HCT116 (cell line): ENCODE measurements at regions of chr11 and their contacts with region 1.

Region 1: DNA sequence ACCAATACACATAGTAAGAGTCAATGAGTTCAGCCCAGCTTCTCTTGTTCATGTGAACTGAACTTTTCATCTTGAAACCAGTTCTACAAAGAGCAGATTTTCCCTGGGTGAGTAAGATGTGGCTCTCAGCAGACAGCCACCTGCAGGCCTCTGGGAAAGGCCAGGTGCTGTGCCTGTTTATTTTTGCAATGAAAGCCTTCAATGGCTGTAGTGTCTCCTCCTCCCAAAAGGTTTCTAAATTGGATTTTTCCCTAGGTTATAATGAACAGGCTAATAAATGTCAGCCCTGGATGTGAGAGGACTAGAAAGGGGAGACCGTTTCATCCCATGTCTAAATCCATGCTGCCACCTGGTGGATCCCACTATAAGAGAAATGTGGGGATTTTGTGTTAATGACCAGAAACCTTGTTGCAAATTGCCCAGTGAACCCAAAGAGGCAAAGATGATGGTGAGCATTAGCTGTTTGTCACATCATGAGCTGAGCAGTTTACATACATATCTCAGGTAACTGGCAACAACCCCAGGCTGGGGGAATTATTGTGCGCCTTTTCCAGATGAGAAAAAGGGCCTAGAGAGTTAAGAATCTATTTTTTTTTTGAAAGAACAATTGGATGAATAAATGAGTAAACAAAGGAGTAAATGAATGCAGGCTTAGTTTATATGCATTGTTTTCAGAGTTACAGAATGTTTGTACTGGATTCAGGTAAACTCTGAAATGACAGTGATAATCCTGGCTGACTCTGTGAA is 12.7 kb downstream of the C11orf91 start:
- DNase-seq: peak; percentile 60
- ATAC-seq: peak; percentile 43
- H3K4me3 ChIP-seq: no peak overlapping the region
- H3K27ac ChIP-seq: no peak overlapping the region
- H3K4me1 ChIP-seq: peaks cover 29 to 56% of the 10 kb centered on the region in 2 experiments
- H3K27me3 ChIP-seq: no peaks in the 10 kb centered on the region
- CTCF ChIP-seq: peak; percentile 70 to 90 (median 88); a peak in 5 of 6 replicates
- POLR2A ChIP-seq: no peak
- RAD21 ChIP-seq: peak; percentile 98

Region 2: DNA sequence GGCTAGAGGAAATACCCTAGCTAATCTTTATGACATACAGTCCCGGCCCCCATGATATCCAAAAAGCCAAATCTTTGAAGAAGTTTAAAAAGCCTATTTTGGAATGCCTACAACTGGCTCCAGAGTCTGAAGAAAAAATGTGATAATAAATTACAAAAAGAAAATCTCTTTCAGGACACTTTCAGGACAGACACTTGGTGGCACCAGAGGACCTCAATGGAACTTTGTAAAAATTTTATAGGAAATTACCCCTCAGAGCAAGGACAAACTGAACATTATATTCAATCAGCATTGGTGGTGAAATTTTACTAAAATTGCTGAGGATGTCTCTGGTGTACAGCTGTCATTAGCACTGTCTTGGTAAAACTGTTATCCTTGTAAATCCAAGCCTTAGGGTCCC is 974.4 kb before region 1 on chr11:
- CTCF ChIA-PET with region 1: no interaction called
- POLR2A ChIA-PET with region 1: no interaction called
- RAD21 ChIA-PET with region 1: no interaction called
- intact Hi-C with region 1: loop called (anchors 10 kb)
- DNase-seq: peak; percentile 8
- ATAC-seq: peak; percentile 66
- H3K4me3 ChIP-seq: no peak overlapping the region
- H3K27ac ChIP-seq: no peak overlapping the region
- H3K4me1 ChIP-seq: no peaks in the 10 kb centered on the region
- H3K27me3 ChIP-seq: no peaks in the 10 kb centered on the region
- CTCF ChIP-seq: peak; percentile 55 to 69 (median 68)
- POLR2A ChIP-seq: no peak
- RAD21 ChIP-seq: peak; percentile 81

Region 3: GRCh38 chr11:32960553-32961164 is 727.2 kb before region 1 on chr11:
- CTCF ChIA-PET with region 1: no interaction called
- POLR2A ChIA-PET with region 1: no interaction called
- RAD21 ChIA-PET with region 1: no interaction called
- intact Hi-C with region 1: loop called (anchors 5 kb)
- DNase-seq: peak; percentile 28
- ATAC-seq: no peak
- H3K4me3 ChIP-seq: no peak overlapping the region
- H3K27ac ChIP-seq: no peak overlapping the region
- H3K4me1 ChIP-seq: no peaks in the 10 kb centered on the region
- H3K27me3 ChIP-seq: no peaks in the 10 kb centered on the region
- CTCF ChIP-seq: peak; percentile 49 to 72 (median 64)
- POLR2A ChIP-seq: no peak
- RAD21 ChIP-seq: peak; percentile 82

Region 4: GRCh38 chr11:33195462-33196173 is 492.3 kb before region 1 on chr11:
- CTCF ChIA-PET with region 1: no interaction called
- POLR2A ChIA-PET with region 1: interaction called, 10 read pairs
- RAD21 ChIA-PET with region 1: no interaction called
- intact Hi-C with region 1: no loop called
- DNase-seq: no peak
- ATAC-seq: no peak
- H3K4me3 ChIP-seq: no peak overlapping the region
- H3K27ac ChIP-seq: no peak overlapping the region
- H3K4me1 ChIP-seq: no peaks in the 10 kb centered on the region
- H3K27me3 ChIP-seq: no peaks in the 10 kb centered on the region
- CTCF ChIP-seq: no peak
- POLR2A ChIP-seq: no peak
- RAD21 ChIP-seq: no peak

Region 5: DNA sequence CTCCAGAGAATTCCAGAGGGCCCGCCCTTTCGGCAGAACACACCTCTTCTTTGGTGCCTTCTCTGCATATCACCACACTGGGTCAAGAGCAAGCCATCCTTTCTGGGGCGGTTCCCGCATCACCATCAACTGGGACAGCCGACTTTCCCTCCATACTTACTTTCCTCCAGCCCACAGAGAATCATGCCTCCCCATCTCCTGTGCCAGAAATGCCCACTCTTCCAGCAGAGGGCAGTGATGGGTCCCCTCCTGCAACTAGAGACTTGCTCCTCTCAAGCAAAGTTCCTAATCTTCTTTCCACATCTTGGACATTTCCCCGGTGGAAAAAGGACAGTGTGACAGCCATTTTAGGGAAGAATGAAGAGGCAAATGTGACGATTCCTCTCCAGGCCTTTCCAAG is 145.0 kb before region 1 on chr11:
- CTCF ChIA-PET with region 1: interaction called, 6 read pairs
- POLR2A ChIA-PET with region 1: no interaction called
- RAD21 ChIA-PET with region 1: no interaction called
- intact Hi-C with region 1: loop called (anchors 1 kb)
- DNase-seq: peak; percentile 22
- ATAC-seq: peak; percentile 94
- H3K4me3 ChIP-seq: no peak overlapping the region
- H3K27ac ChIP-seq: no peak overlapping the region
- H3K4me1 ChIP-seq: peaks cover 0 to 5% of the 10 kb centered on the region in 2 experiments; a peak in 1 of 4 replicates
- H3K27me3 ChIP-seq: no peaks in the 10 kb centered on the region
- CTCF ChIP-seq: peak; percentile 67 to 87 (median 80); a peak in 5 of 6 replicates
- POLR2A ChIP-seq: no peak
- RAD21 ChIP-seq: peak; percentile 76

Region 6: GRCh38 chr11:33655842-33656600 is 31.9 kb before region 1 on chr11:
- CTCF ChIA-PET with region 1: no interaction called
- POLR2A ChIA-PET with region 1: no interaction called
- RAD21 ChIA-PET with region 1: no interaction called
- intact Hi-C with region 1: no loop called
- DNase-seq: no peak
- ATAC-seq: no peak
- H3K4me3 ChIP-seq: no peak overlapping the region
- H3K27ac ChIP-seq: no peak overlapping the region
- H3K4me1 ChIP-seq: peaks cover 0 to 6% of the 10 kb centered on the region in 2 experiments; a peak in 1 of 4 replicates
- H3K27me3 ChIP-seq: no peaks in the 10 kb centered on the region
- CTCF ChIP-seq: no peak
- POLR2A ChIP-seq: no peak
- RAD21 ChIP-seq: no peak

Region 7: DNA sequence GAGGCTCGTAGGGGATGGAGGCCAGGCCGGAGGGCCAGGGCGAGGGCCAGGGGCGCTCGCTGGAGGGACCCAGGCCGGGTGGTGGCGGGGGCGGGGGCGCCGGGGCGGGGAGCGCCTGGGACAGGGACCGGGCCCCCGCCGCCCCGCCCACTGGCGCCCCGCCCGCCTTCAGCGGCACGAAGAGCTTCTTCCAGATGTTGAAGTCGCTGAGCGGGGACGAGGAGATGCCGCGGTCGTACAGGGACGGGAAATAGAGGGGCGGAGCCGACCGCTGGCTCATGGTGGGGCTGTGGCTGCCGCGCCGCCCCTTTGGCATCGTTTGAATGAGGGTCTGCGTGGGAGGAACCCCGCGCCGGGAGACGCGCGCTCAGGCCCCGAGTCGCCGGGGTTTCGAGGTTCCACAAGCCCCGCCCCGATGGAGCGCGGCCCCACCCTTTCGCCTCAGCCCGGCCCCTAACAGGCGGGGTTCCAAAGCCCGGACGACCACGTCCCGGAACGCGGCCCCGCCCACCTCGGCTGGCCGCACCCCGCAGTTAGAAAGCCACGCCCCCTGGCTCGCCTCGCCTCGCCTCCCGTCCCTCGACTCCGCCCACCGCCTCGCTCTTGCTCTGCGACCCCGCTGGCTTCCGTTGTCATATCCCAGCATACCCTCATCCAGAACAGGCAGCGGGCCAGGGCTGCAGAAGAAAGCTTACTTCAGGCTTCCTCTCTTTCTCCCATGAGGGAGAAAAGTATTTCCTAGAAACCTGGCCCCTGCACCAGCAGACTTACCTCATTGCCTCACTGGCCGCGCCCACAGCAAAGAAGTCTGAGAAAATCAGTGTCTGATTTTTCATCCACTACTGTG is 12.7 kb after region 1 on chr11 and contains the start of gene C11orf91:
- CTCF ChIA-PET with region 1: no interaction called
- POLR2A ChIA-PET with region 1: interaction called, 38 read pairs
- RAD21 ChIA-PET with region 1: no interaction called
- intact Hi-C with region 1: no loop called
- DNase-seq: peak; percentile 76
- ATAC-seq: peak; percentile 93
- H3K4me3 ChIP-seq: peak within 1 kb of the TSS; percentile 44 to 52
- H3K27ac ChIP-seq: peak within 1 kb of the TSS; percentile 23; the same call in 1 of the 2 replicates
- H3K4me1 ChIP-seq: peaks cover 10 to 71% of the 10 kb centered on the region in 2 experiments
- H3K27me3 ChIP-seq: no peaks in the 10 kb centered on the region
- CTCF ChIP-seq: no peak
- POLR2A ChIP-seq: no peak
- RAD21 ChIP-seq: no peak
- total RNA-seq, gene C11orf91: 0.54 TPM

Region 8: GRCh38 chr11:33949252-33949913 is 261.5 kb after region 1 on chr11:
- CTCF ChIA-PET with region 1: no interaction called
- POLR2A ChIA-PET with region 1: no interaction called
- RAD21 ChIA-PET with region 1: no interaction called
- intact Hi-C with region 1: no loop called
- DNase-seq: no peak
- ATAC-seq: no peak
- H3K4me3 ChIP-seq: no peak overlapping the region
- H3K27ac ChIP-seq: no peak overlapping the region
- H3K4me1 ChIP-seq: no peaks in the 10 kb centered on the region
- H3K27me3 ChIP-seq: no peaks in the 10 kb centered on the region
- CTCF ChIP-seq: no peak
- POLR2A ChIP-seq: no peak
- RAD21 ChIP-seq: no peak